ENCODE measurements at regions of chr21 and their contacts with region 1.

Region 1: GRCh38 chr21:35840197-35840799 is 220.0 kb downstream of the SETD4 start:
- DNase-seq: peak; percentile 50
- ATAC-seq: peak; percentile 50; the same call in 1 of the 3 replicates
- H3K4me3 ChIP-seq: no peak overlapping the region
- H3K27ac ChIP-seq: no peak overlapping the region
- H3K4me1 ChIP-seq: no peaks in the 10 kb centered on the region
- H3K27me3 ChIP-seq: no peaks in the 10 kb centered on the region
- CTCF ChIP-seq: peak; percentile 69
- EP300 ChIP-seq: no peak
- POLR2A ChIP-seq: no peak
- RAD21 ChIP-seq: peak; percentile 47; the same call in 1 of the 2 replicates

Region 2: GRCh38 chr21:34693192-34693810 is 1147.0 kb before region 1 on chr21:
- CTCF ChIA-PET with region 1: no interaction called
- POLR2A ChIA-PET with region 1: no interaction called
- in situ Hi-C with region 1: loop called (anchors 10 kb)
- intact Hi-C with region 1: no loop called
- DNase-seq: peak; percentile 55
- ATAC-seq: peak; percentile 56
- H3K4me3 ChIP-seq: no peak overlapping the region
- H3K27ac ChIP-seq: no peak overlapping the region
- H3K4me1 ChIP-seq: 0 out of 2 replicates have a peak, but pooled peaks cover 13% of the 10 kb centered on the region
- H3K27me3 ChIP-seq: peaks cover 0 to 34% of the 10 kb centered on the region in 2 experiments; a peak in 2 of 5 replicates
- CTCF ChIP-seq: peak; percentile 75
- EP300 ChIP-seq: no peak
- POLR2A ChIP-seq: no peak
- RAD21 ChIP-seq: peak; percentile 27; the same call in 1 of the 2 replicates

Region 3: GRCh38 chr21:35682904-35683549 is 157.3 kb before region 1 on chr21:
- CTCF ChIA-PET with region 1: no interaction called
- POLR2A ChIA-PET with region 1: no interaction called
- in situ Hi-C with region 1: no loop called
- intact Hi-C with region 1: no loop called
- DNase-seq: no peak
- ATAC-seq: no peak
- H3K4me3 ChIP-seq: no peak overlapping the region
- H3K27ac ChIP-seq: no peak overlapping the region
- H3K4me1 ChIP-seq: peaks cover 7% of the 10 kb centered on the region
- H3K27me3 ChIP-seq: no peaks in the 10 kb centered on the region
- CTCF ChIP-seq: no peak
- EP300 ChIP-seq: no peak
- POLR2A ChIP-seq: no peak
- RAD21 ChIP-seq: no peak

Region 4: GRCh38 chr21:36015045-36015444 is 174.7 kb after region 1 on chr21:
- CTCF ChIA-PET with region 1: no interaction called
- POLR2A ChIA-PET with region 1: no interaction called
- in situ Hi-C with region 1: no loop called
- intact Hi-C with region 1: no loop called
- DNase-seq: no peak
- ATAC-seq: no peak
- H3K4me3 ChIP-seq: no peak overlapping the region
- H3K27ac ChIP-seq: no peak overlapping the region
- H3K4me1 ChIP-seq: peaks cover 6% of the 10 kb centered on the region; the same call in 1 of the 2 replicates
- H3K27me3 ChIP-seq: peaks cover 0 to 6% of the 10 kb centered on the region in 2 experiments; a peak in 2 of 5 replicates
- CTCF ChIP-seq: no peak
- EP300 ChIP-seq: no peak
- POLR2A ChIP-seq: no peak
- RAD21 ChIP-seq: no peak

Region 5: DNA sequence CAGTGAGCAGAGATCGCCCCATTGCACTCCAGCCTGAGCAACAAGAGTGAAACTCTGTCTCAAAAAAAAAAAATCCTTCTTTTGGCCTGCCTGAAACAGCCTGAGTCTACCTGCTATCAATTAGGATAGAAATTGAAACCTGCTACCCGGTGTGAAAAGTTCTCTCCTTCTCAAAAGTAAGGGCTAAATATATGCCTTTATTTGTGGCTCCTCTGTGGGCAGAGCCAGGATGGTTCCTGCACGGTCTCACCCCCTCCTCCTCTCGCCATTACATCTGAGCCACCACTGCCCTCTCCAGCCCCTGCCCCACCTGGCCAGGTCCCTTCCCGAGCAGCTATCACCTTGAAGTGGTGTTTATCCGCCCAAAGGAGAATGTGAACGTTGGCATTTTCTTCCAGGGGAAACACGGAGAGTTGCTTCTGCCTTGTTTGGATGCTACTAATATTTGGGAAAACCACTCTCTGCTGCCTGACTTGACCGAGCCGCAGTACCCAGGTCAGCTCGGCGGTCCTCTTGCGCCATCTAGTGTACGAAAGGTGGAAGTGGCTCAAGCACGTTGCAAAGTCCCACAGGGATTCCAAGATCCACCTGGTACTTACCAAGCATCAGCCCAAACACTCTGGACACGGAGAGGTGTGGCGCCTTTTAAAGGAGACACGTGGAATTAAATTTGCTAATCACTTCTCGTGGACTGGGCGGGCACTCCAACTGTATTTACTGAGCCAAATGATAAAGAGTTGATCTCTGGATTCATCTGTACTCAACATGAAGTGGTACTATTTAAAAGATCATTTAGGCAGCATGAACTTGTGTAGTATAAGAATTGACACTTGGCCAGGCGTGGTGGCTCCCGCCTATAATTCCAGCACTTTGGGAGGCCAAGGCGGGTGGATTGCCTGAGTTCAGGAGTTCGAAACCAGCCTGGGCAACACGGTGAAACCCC is 188.1 kb after region 1 on chr21:
- CTCF ChIA-PET with region 1: no interaction called
- POLR2A ChIA-PET with region 1: no interaction called
- in situ Hi-C with region 1: no loop called
- intact Hi-C with region 1: loop called (anchors 5 kb)
- DNase-seq: peak; percentile 47
- ATAC-seq: peak; percentile 92
- H3K4me3 ChIP-seq: no peak overlapping the region
- H3K27ac ChIP-seq: no peak overlapping the region
- H3K4me1 ChIP-seq: peaks cover 6% of the 10 kb centered on the region; the same call in 1 of the 2 replicates
- H3K27me3 ChIP-seq: no peaks in the 10 kb centered on the region
- CTCF ChIP-seq: peak; percentile 97
- EP300 ChIP-seq: no peak
- POLR2A ChIP-seq: no peak
- RAD21 ChIP-seq: peak; percentile 89

Measured in HepG2 (cell line).